Ascending aorta (tissue), 2 donors: ENCODE measurements at regions of chr17 and their contacts with region 1.

Region 1: DNA sequence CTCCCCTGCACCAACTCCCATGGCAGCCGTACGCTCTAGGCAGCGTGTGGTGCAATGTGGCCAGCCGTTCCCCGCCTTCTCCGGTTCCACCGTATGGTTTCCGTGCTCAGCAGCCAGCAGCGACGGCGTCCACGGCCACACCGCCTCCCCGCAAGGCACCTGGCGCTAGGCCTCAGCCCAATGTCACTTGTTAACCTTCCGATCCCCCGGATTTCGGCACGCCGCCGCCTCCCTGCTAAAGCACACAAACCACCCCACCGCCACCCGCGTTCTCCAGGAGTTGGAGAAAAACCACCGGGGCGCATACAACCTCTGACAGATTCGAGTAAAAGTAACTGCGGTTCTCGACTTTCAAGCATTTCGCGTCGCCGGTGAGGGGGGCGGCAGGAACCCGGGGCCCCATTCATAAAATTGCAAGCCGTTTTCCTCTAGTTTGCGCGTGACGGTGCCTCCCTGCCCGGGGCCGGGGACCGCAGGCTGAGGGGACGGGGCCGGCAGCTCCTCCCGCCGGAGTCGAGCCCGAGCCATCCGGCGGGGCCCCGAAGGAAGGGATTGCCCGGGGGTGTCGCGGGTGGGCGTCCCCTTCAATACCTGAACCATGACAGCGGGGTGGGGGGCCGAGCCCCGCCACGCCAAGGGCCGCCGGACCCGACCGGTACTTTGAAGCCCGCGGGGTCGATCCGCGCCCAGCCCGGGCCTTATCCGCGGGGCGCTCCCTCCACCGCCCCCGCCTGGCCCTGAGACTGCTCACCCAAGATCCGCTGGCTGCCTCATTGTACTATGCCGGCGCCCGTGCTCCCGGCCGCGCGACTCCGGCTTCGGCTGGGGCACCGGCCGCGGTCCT is at the start of gene TEX2:
- DNase-seq: peak in 1 of 2 donors; percentile 79
- H3K4me3 ChIP-seq: peak within 1 kb of the TSS; percentile 92 to 98
- H3K27ac ChIP-seq: peak within 1 kb of the TSS; percentile 90 to 93
- H3K4me1 ChIP-seq: peaks cover 0 to 23% of the 10 kb centered on the region in 2 donors
- H3K27me3 ChIP-seq: no peaks in the 10 kb centered on the region
- CTCF ChIP-seq: no peak
- total RNA-seq, gene TEX2: 94.6 TPM

Region 2: DNA sequence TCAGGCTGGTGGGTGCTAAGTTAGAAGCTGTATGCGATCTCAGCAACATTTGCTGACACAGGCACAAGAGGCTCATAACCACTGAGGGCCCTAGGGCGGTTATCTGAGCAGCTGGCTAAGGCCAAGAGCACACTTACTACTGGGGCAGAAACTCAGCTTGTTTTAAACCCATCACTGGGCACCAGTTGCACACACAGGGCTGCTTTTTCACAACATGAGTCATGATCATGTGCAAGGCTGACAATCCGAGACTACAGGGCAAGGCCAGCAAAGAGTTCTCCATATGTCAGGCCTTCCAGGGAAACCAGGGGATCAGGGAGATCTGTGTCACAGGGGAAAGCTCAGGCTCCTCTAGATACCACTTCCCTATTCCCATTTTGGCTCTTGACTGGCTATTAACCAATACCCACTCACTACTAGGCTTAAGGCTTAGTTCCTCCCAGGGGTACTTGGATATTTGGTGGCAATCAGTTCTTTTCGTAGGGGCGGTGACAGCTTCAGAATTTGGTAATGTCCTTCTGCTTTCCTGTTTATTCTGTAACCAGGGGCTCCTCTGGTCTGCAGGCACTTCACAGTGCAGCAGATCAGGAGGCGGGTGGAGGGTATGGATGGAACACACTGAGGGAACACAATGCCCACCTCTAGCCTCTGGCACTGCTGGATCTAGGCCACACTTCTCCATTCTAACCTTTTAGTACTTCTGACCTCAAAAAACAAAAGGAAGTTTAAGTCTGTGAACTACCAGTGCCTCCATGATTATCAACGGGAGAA is 87.8 kb before region 1 on chr17:
- intact Hi-C with region 1: loop called (anchors 2 kb)
- DNase-seq: peak; percentile 33 to 79
- H3K4me3 ChIP-seq: no peak overlapping the region
- H3K27ac ChIP-seq: peak overlapping the region; percentile 84 to 85
- H3K4me1 ChIP-seq: peaks cover 14 to 48% of the 10 kb centered on the region in 2 donors
- H3K27me3 ChIP-seq: no peaks in the 10 kb centered on the region
- CTCF ChIP-seq: no peak

Region 3: DNA sequence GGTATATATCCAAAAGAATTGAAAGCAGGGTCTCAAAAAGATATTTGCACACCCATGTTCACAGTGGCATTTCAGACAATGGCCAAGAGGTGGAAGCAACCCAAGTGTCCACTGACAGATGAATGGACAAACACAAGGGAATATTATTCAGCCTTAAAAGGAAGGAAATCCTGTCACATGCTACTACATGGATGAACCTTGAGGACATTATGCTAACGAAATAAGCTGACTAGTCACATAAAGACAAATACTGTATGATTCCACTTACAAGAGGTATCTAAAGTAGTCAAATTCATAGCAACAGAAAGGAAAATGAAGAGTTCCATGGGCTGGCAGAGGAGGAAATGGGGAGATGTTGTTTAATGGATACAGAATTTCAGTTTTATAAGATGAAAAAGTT is 41.0 kb before region 1 on chr17:
- intact Hi-C with region 1: loop called (anchors 2 kb)
- DNase-seq: no peak
- H3K4me3 ChIP-seq: no peak overlapping the region
- H3K27ac ChIP-seq: no peak overlapping the region
- H3K4me1 ChIP-seq: peaks cover 5 to 26% of the 10 kb centered on the region in 2 donors
- H3K27me3 ChIP-seq: no peaks in the 10 kb centered on the region
- CTCF ChIP-seq: no peak

Region 4: DNA sequence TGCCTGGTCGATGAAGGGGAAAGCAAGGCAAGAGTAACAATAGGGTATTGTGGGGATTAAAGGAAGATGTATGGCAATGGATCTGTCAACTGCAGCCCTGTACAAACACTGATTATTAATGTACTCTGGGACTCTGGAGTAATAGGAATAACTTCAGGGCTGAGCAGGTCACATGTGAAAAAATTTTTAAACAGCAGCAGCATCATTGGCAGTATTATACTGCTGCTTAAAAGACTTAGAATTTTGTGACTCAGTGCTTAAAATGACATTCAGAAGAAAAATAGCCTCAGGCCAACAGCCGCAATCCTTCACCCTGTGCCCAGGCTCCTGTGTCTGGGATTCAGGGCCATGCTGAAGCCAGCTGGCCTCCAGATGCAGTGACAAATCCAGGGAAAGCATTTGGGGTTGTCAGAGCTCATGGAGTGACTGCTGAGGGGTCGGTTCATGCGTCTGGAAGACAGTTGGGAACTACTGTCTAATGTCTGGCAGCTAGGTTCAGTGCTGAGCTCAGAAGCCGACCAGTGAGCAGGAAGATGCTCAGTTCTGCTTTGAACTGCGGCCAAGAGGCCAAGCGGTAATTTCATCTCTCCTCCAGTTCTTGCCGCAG is 21.8 kb before region 1 on chr17:
- intact Hi-C with region 1: loop called (anchors 1 kb)
- DNase-seq: peak; percentile 28 to 87
- H3K4me3 ChIP-seq: peak overlapping the region in 1 of 2 donors; percentile 18
- H3K27ac ChIP-seq: peak overlapping the region; percentile 72 to 81
- H3K4me1 ChIP-seq: peaks cover 7 to 27% of the 10 kb centered on the region in 2 donors
- H3K27me3 ChIP-seq: no peaks in the 10 kb centered on the region
- CTCF ChIP-seq: no peak

Region 5: DNA sequence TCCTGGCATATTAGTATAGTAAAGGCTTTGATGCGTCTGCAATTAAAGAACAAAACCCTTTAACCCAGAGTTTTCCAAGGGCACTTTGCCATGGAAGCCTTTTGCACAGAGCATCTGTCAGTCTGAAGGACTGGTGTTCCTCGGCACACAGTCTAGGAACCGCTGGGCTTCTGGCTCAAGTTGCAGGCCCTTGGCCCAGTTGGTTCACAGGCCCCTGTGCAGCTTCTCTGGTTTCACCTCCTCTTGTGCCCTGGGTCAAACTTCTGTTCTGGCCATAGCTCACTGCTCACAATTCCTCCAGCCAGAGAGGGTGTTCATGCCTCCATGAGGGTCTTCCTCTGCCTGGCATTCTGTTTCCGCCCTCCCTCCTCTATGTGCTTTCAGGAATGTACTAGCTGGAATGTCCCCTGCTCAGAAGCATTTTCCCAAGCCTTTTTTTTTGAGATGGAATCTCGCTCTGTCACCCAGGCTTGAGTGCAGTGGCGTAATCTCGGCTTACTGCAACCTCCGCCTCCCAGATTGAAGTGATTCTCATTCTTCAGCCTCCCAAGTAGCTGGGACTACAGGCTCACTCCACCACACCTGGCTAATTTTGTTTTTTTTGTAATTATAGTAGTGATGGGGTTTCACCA is 34.9 kb after region 1 on chr17:
- intact Hi-C with region 1: no loop called
- DNase-seq: no peak
- H3K4me3 ChIP-seq: no peak overlapping the region
- H3K27ac ChIP-seq: no peak overlapping the region
- H3K4me1 ChIP-seq: no peaks in the 10 kb centered on the region
- H3K27me3 ChIP-seq: no peaks in the 10 kb centered on the region
- CTCF ChIP-seq: no peak

Region 6: DNA sequence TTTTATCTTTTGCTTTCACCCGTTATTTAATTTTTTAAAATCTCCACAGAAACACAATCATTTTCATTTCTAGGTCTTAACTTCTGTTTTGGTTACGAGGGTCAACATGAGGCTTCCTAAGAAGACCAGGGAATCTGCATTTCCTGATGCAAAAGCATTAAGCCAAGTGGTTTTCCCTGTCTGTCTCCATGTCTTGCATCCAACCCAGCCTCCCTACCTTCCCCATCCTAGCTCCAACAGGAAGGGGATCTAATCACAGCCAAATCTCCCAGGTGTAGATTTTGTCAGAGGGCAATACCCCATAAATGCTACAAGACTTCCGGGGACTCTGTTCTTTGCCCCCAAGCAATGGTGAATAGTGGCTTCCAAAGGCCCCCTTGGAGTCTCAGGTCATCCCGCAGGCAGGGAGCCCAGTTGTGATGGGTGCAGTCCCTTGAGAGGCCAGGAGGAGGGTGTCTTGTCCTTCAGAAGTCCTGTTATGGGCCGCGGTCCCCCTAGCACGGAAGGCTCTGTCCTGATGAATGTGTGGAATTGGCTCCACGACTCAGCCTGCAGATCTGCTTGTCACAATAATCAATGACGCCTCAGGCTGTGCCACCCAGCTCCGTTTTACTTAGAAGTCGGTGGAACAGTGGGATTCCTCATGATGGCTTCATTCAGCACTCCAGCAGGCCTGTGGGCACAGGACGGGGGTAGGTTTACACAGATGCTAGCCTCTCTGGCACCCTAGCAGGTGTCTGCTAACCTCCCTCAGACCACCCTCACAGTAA is 1015.6 kb after region 1 on chr17:
- intact Hi-C with region 1: no loop called
- DNase-seq: peak in 1 of 2 donors; percentile 63
- H3K4me3 ChIP-seq: peak overlapping the region in 1 of 2 donors; percentile 40
- H3K27ac ChIP-seq: peak overlapping the region in 1 of 2 donors; percentile 61
- H3K4me1 ChIP-seq: peaks cover 0 to 7% of the 10 kb centered on the region in 2 donors
- H3K27me3 ChIP-seq: no peaks in the 10 kb centered on the region
- CTCF ChIP-seq: peak in 1 of 3 experiments; percentile 34